ENCODE measurements at regions of chr3 and their contacts with region 1.

Region 1: GRCh38 chr3:158727206-158728060 is 4.8 kb downstream of the RARRES1 start:
- DNase-seq: peak; percentile 80
- H3K4me3 Mint-ChIP-seq: peak overlapping the region; percentile 93
- H3K27ac Mint-ChIP-seq: peak overlapping the region; percentile 37
- H3K4me1 Mint-ChIP-seq: peaks cover 76% of the 10 kb centered on the region
- H3K27me3 Mint-ChIP-seq: no peaks in the 10 kb centered on the region
- CTCF ChIP-seq: peak; percentile 87

Region 2: DNA sequence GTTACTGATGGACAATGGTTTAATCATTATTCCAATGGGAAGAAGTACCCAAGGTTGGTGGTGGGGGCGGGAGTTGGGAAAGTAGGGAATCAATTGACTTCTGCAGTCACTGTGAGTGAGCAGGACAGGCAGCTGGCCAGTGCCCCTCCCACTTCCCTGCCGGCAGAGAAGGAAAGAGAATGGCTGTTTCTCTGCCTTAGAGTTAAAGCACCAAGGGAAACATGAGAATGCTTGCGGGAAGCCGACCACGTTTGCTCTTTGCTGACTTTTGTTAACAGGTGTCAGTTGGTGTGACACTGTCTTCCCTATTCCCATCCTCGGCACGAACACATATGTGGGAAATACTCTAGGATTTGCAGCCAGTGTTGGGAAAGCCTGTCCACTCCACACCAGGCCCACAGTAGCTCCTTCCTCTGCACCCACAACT is 40.9 kb after region 1 on chr3:
- CTCF ChIA-PET with region 1: interaction called, 38 read pairs
- intact Hi-C with region 1: loop called (anchors 1 kb)
- DNase-seq: peak; percentile 86
- H3K4me3 Mint-ChIP-seq: peak overlapping the region; percentile 13
- H3K27ac Mint-ChIP-seq: peak overlapping the region; percentile 100
- H3K4me1 Mint-ChIP-seq: peaks cover 90% of the 10 kb centered on the region
- H3K27me3 Mint-ChIP-seq: no peaks in the 10 kb centered on the region
- CTCF ChIP-seq: no peak

Region 3: GRCh38 chr3:158773845-158774830 is 46.7 kb after region 1 on chr3:
- CTCF ChIA-PET with region 1: interaction called, 38 read pairs
- intact Hi-C with region 1: loop called (anchors 1 kb)
- DNase-seq: peak; percentile 61
- H3K4me3 Mint-ChIP-seq: peak overlapping the region; percentile 48
- H3K27ac Mint-ChIP-seq: peak overlapping the region; percentile 100
- H3K4me1 Mint-ChIP-seq: peaks cover 75% of the 10 kb centered on the region
- H3K27me3 Mint-ChIP-seq: no peaks in the 10 kb centered on the region
- CTCF ChIP-seq: peak; percentile 52

Region 4: DNA sequence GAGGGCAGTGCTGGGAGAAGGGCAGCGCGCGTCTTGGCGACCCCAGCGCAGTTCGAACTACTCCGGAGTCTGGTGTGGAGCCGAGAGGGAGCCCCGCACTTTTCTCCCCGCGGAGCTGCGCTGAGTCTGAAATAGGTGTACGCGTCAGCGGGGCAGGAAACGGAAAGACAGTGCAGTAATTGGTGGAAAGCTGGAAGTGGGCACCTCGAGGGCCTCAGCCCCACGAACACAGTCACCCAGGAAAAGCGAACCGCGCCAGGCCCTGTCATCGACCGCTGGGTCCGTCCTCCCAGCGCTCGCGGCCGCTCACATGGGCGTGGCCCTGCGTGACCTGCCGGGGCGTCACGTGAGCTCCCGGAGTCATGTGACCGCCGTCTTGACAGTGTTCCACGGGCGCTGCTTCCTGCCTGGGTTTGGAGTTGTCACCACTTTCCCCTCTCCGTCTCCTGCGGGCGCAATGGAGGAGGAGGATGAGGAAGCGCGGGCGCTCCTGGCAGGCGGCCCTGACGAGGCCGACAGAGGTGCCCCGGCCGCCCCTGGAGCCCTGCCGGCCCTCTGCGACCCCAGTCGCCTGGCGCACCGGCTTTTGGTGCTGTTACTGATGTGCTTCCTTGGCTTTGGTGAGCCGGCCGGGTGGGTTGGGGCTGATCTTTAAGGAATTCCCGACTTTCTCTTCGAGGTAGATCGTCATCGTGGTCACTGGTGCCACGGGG is 74.4 kb after region 1 on chr3 and contains the start of gene MFSD1:
- CTCF ChIA-PET with region 1: interaction called, 13 read pairs
- intact Hi-C with region 1: no loop called
- DNase-seq: peak; percentile 97
- H3K4me3 Mint-ChIP-seq: peak within 1 kb of the TSS; percentile 78
- H3K27ac Mint-ChIP-seq: peak within 1 kb of the TSS; percentile 82
- H3K4me1 Mint-ChIP-seq: peaks cover 28% of the 10 kb centered on the region
- H3K27me3 Mint-ChIP-seq: no peaks in the 10 kb centered on the region
- CTCF ChIP-seq: no peak
- total RNA-seq, gene MFSD1: 95.8 and 100 TPM in 2 replicates

Region 5: DNA sequence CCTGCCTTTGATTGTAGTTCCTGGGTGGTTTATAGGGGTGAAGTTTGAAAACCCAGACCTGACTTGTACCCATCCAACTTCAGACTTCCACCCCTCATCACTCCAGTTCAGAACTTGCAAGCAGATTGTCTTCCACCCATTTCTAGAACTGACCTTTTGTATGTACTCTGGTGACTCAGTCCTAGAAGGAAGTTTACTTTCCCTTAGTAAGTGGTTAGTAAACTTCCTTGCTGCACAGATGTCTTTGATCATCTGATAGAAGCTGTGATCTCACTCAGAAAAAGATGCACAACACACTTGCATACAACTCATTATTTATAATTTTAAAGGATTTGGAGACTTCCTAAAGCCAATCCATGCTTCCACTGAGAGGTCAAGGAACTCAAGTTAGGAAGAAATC is 442.4 kb after region 1 on chr3:
- CTCF ChIA-PET with region 1: no interaction called
- intact Hi-C with region 1: loop called (anchors 10 kb)
- DNase-seq: peak; percentile 25
- H3K4me3 Mint-ChIP-seq: no peak overlapping the region
- H3K27ac Mint-ChIP-seq: peak overlapping the region; percentile 96
- H3K4me1 Mint-ChIP-seq: peaks cover 66% of the 10 kb centered on the region
- H3K27me3 Mint-ChIP-seq: no peaks in the 10 kb centered on the region
- CTCF ChIP-seq: no peak

Measured in Calu3 (cell line).